Activated CD8-positive, alpha-beta T cell treated with anti-CD3 and anti-CD28 coated beads for 36 hours (primary cell): ENCODE measurements at regions of chr1 and their contacts with region 1.

Region 1: GRCh38 chr1:24486331-24487065 is 16.1 kb upstream of the RCAN3 start:
- DNase-seq: no peak
- ATAC-seq: peak; percentile 24
- H3K4me3 Mint-ChIP-seq: peak overlapping the region; percentile 70
- H3K27ac Mint-ChIP-seq: peak overlapping the region; percentile 93
- H3K4me1 Mint-ChIP-seq: peaks cover 76% of the 10 kb centered on the region
- H3K27me3 Mint-ChIP-seq: no peaks in the 10 kb centered on the region
- CTCF ChIP-seq: no peak

Region 2: GRCh38 chr1:24451746-24452145 is 34.8 kb before region 1 on chr1:
- CTCF ChIA-PET with region 1: no interaction called
- POLR2A ChIA-PET with region 1: no interaction called
- intact Hi-C with region 1: no loop called
- DNase-seq: no peak
- ATAC-seq: no peak
- H3K4me3 Mint-ChIP-seq: no peak overlapping the region
- H3K27ac Mint-ChIP-seq: no peak overlapping the region
- H3K4me1 Mint-ChIP-seq: no peaks in the 10 kb centered on the region
- H3K27me3 Mint-ChIP-seq: no peaks in the 10 kb centered on the region
- CTCF ChIP-seq: no peak

Region 3: GRCh38 chr1:24526940-24527542 is 40.5 kb after region 1 on chr1:
- CTCF ChIA-PET with region 1: interaction called, 14 read pairs
- POLR2A ChIA-PET with region 1: interaction called, 6 read pairs
- intact Hi-C with region 1: loop called (anchors 10 kb)
- DNase-seq: peak; percentile 70
- ATAC-seq: peak; percentile 65
- H3K4me3 Mint-ChIP-seq: no peak overlapping the region
- H3K27ac Mint-ChIP-seq: peak overlapping the region; percentile 55
- H3K4me1 Mint-ChIP-seq: peaks cover 57% of the 10 kb centered on the region
- H3K27me3 Mint-ChIP-seq: no peaks in the 10 kb centered on the region
- CTCF ChIP-seq: peak; percentile 82

Region 4: DNA sequence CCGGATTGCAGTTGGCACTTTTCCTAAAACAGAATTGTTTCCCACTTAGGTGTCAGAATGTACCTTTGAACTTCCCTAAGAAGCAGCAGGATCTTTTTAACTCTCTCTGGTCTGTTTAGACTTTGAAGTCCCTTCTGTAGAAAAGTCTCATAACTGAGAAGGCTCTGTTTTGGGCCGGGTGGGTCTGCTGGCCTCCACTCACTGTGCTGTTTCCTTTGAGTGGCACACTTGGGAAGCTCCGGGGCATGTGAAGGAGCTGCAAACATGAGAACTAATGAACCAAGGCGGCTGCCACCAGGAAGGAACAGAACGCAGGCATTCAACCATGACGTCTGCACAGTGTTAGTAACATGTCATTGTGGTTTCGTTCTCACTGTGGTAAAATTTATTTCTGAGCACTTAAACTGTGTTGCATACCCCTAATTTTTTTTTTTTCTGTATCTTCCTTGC is 49.9 kb after region 1 on chr1:
- CTCF ChIA-PET with region 1: interaction called, 15 read pairs
- POLR2A ChIA-PET with region 1: interaction called, 11 read pairs
- intact Hi-C with region 1: loop called (anchors 10 kb)
- DNase-seq: peak; percentile 84
- ATAC-seq: peak; percentile 61
- H3K4me3 Mint-ChIP-seq: peak overlapping the region; percentile 72
- H3K27ac Mint-ChIP-seq: peak overlapping the region; percentile 98
- H3K4me1 Mint-ChIP-seq: peaks cover 71% of the 10 kb centered on the region
- H3K27me3 Mint-ChIP-seq: no peaks in the 10 kb centered on the region
- CTCF ChIP-seq: no peak

Region 5: GRCh38 chr1:24551960-24552571 is 65.6 kb after region 1 on chr1:
- CTCF ChIA-PET with region 1: no interaction called
- POLR2A ChIA-PET with region 1: no interaction called
- intact Hi-C with region 1: no loop called
- DNase-seq: no peak
- ATAC-seq: no peak
- H3K4me3 Mint-ChIP-seq: no peak overlapping the region
- H3K27ac Mint-ChIP-seq: no peak overlapping the region
- H3K4me1 Mint-ChIP-seq: peaks cover 11% of the 10 kb centered on the region
- H3K27me3 Mint-ChIP-seq: peaks cover 14% of the 10 kb centered on the region
- CTCF ChIP-seq: no peak

Region 6: DNA sequence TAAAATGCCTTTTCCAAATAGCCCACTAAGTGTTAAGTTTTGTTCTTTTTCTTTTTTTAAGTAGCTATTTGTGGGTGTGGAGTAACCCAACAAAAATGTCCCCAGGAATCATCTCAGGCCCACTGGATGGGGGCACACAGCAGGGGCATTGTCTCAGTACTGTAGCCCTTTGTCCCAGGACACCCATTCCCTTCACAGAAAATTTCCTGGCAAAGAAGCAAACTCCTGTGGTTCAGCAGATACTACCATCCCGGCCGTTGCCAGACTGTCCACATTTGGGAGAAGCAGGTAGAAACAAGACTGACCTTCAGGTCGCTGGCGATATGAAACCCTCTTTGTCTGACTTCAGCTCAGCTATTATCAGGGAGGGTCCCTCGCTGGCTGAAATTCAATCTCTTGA is 132.9 kb after region 1 on chr1:
- CTCF ChIA-PET with region 1: no interaction called
- POLR2A ChIA-PET with region 1: no interaction called
- intact Hi-C with region 1: no loop called
- DNase-seq: no peak
- ATAC-seq: no peak
- H3K4me3 Mint-ChIP-seq: no peak overlapping the region
- H3K27ac Mint-ChIP-seq: no peak overlapping the region
- H3K4me1 Mint-ChIP-seq: no peaks in the 10 kb centered on the region
- H3K27me3 Mint-ChIP-seq: peaks cover 15% of the 10 kb centered on the region
- CTCF ChIP-seq: no peak